Thyroid gland (tissue), 4 donors: ENCODE measurements at regions of chr6 and their contacts with region 1.

Region 1: DNA sequence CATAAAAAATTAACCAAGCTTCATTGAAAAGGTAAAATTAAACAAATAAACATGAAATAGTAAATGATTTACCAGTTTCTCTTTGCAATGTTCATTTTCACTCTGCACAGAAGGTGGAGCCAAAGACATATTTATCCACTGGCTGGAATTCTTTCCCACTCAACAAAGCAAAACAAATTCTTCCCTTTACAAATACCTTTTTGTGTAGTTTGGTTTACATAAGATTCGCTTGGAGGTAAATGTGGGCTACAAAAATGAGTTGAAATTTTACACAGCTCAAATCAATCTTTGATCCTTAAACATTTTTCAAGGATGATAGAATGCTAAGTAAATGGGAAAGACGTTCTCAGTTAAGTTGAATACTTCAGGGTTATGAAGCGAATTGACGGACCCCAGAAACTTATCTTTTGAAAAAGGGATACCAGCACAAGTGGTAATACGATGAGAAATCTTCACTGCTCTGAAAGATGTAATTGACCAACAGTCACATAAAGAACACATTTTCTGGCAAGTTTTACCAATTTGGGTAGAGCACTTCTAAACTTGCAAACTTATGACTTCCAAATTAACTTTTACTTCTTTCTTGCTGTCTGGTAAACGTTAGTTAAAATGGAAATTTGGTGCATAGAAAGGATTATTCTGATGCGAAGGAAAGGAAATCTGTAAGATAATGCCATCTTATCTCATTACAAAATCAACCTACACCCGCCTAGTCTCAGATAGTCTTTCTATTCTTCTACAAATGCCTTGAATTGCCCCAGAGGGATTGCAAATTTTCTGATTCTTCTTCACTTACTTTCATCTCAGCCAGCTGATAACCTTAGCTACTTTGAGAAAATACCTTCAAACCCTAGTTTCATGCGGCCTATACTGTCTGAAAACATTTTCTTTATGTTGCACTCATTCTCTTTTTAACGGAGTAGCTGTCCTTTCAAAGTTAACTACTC is 4.7 kb upstream of the GJA1 start:
- DNase-seq: no peak
- H3K4me3 ChIP-seq: no peak overlapping the region
- H3K27ac ChIP-seq: peak overlapping the region in 1 of 3 donors; percentile 20
- H3K4me1 ChIP-seq: peaks cover 7 to 18% of the 10 kb centered on the region in 2 donors
- H3K27me3 ChIP-seq: no peaks in the 10 kb centered on the region
- CTCF ChIP-seq: peak; percentile 28 to 98 (median 77)
- POLR2A ChIP-seq: no peak

Region 2: DNA sequence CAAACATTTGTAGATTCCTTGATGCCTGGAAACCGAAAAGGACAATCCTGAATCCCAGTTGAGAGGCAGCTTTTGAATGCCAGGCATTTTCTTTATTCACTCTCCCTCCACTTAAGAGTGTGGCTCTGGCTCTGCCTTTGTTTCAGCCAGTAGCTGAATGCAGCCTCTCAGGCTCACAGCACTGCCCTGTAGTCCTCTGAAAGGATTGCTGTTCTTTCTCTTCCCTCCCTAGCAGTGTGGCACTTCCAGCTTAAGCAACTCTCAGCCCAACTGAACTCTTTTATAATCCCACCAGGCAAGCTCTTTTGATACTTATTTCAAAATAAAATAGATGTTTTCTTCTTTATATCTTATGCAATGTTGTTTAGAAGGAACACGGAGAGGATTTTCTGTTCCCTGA is 420.3 kb after region 1 on chr6:
- intact Hi-C with region 1: loop called (anchors 5 kb)
- DNase-seq: peak; percentile 58 to 59
- H3K4me3 ChIP-seq: no peak overlapping the region
- H3K27ac ChIP-seq: peak overlapping the region; percentile 84 to 94 (median 88)
- H3K4me1 ChIP-seq: peaks cover 37 to 38% of the 10 kb centered on the region in 2 donors
- H3K27me3 ChIP-seq: no peaks in the 10 kb centered on the region
- CTCF ChIP-seq: no peak
- POLR2A ChIP-seq: peak in 1 of 2 donors; percentile 63

Region 3: GRCh38 chr6:122035173-122035572 is 604.4 kb after region 1 on chr6:
- intact Hi-C with region 1: loop called (anchors 5 kb)
- DNase-seq: no peak
- H3K4me3 ChIP-seq: no peak overlapping the region
- H3K27ac ChIP-seq: no peak overlapping the region
- H3K4me1 ChIP-seq: peaks cover 5% of the 10 kb centered on the region in 2 donors
- H3K27me3 ChIP-seq: no peaks in the 10 kb centered on the region
- CTCF ChIP-seq: no peak
- POLR2A ChIP-seq: no peak